ENCODE measurements at regions of chr3 and their contacts with region 1.

Region 1: DNA sequence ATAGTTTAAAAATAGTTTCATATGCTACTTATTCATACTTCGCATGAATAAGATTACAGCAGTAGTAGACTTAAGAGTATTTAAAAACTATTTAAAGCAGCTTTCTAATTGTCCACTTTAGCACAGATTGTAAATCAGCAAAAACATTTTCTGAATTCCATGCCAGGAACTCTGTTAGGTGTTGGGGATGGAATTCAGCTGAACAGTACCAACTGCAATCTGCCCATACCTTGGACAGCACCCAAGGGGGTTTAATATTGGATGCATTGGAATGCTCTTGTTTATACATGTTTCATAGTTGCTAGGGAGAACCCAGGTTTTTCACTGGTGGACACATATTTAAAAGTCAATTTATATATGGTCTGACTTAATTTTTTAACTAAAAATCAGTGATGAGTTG is 74.8 kb downstream of the PPM1L start:
- DNase-seq: no peak
- CTCF ChIP-seq: no peak

Region 2: GRCh38 chr3:160842021-160843005 is 11.5 kb after region 1 on chr3:
- CTCF ChIA-PET with region 1: interaction called, 10 read pairs
- POLR2A ChIA-PET with region 1: no interaction called
- DNase-seq: no peak
- CTCF ChIP-seq: no peak

Measured in GM10248 (cell line).